ENCODE measurements at regions of chr11 and their contacts with region 1.

Region 1: GRCh38 chr11:31509429-31510345 is at the starts of genes ELP4 and IMMP1L:
- DNase-seq: peak; percentile 91 to 98 (median 95)
- H3K4me3 ChIP-seq: peak within 1 kb of the TSS; percentile 74 to 87 (median 78)
- H3K4me3 Mint-ChIP-seq: peak within 1 kb of the TSS; percentile 98 to 100
- H3K27ac ChIP-seq: peak within 1 kb of the TSS; percentile 51 to 92
- H3K27ac Mint-ChIP-seq: peak within 1 kb of the TSS; percentile 91 to 98 (median 95)
- H3K4me1 ChIP-seq: peaks cover 10 to 21% of the 10 kb centered on the region in 2 donors
- H3K4me1 Mint-ChIP-seq: peaks cover 22% of the 10 kb centered on the region
- H3K27me3 ChIP-seq: no peaks in the 10 kb centered on the region
- H3K27me3 Mint-ChIP-seq: no peaks in the 10 kb centered on the region
- CTCF ChIP-seq: no peak
- polyA plus RNA-seq, gene ELP4: 6.0 to 17.8 (median 16.4) TPM
- polyA plus RNA-seq, gene IMMP1L: 0.53 to 5.0 (median 4.7) TPM

Region 2: GRCh38 chr11:31369348-31370329 is 140.0 kb before region 1 on chr11 and contains the starts of genes DCDC1 and DNAJC24:
- intact Hi-C with region 1: loop called (anchors 10 kb)
- DNase-seq: peak; percentile 90 to 94 (median 90)
- H3K4me3 ChIP-seq: peak within 1 kb of the TSS; percentile 82 to 94 (median 89)
- H3K4me3 Mint-ChIP-seq: peak within 1 kb of the TSS; percentile 87 to 98
- H3K27ac ChIP-seq: peak within 1 kb of the TSS; percentile 48 to 74
- H3K27ac Mint-ChIP-seq: peak within 1 kb of the TSS; percentile 60 to 91 (median 88)
- H3K4me1 ChIP-seq: peaks cover 12 to 16% of the 10 kb centered on the region in 2 donors
- H3K4me1 Mint-ChIP-seq: peaks cover 22% of the 10 kb centered on the region
- H3K27me3 ChIP-seq: peaks cover 12 to 32% of the 10 kb centered on the region in 2 donors
- H3K27me3 Mint-ChIP-seq: peaks cover 13 to 29% (median 18%) of the 10 kb centered on the region in 3 donors
- CTCF ChIP-seq: no peak
- polyA plus RNA-seq, gene DCDC1: 0.03 TPM in 1 of 3 donors, not detected in the others
- polyA plus RNA-seq, gene DNAJC24: 3.4 to 4.8 (median 4.4) TPM